Activated CD8-positive, alpha-beta T cell treated with anti-CD3 and anti-CD28 coated beads for 36 hours (primary cell): ENCODE measurements at regions of chr12 and their contacts with region 1.

Region 1: DNA sequence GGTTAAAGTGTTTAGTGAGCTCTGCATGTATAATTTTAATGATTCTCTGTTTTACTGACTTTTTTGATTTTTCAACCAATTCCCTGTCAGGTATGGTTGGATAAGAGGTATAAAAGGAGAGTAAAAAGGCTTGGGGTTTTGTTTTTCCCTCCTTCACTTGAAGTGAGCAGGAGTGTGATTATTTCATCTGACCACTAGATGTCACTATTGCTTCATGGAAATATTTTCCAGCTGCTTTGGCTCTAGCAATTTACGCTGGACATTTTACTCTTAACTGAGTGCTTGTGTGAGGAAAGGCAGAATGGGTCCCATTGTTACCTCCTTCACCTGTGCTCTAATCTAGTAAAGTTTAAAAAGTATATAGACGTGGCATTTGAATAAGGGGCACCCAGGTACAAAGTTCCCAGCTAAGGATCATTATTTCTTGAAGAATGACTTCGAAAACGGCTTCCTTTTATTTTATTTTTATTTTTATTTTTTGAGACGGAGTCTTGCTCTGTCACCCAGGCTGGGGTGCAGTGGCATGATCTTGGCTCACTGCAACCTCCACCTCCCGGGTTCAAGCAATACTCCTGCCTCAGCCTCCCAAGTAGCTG is 66.5 kb downstream of the TBC1D30 start:
- DNase-seq: no peak
- ATAC-seq: peak; percentile 67
- H3K4me3 Mint-ChIP-seq: no peak overlapping the region
- H3K27ac Mint-ChIP-seq: no peak overlapping the region
- H3K4me1 Mint-ChIP-seq: peaks cover 5% of the 10 kb centered on the region
- H3K27me3 Mint-ChIP-seq: peaks cover 15% of the 10 kb centered on the region
- CTCF ChIP-seq: peak; percentile 93

Region 2: DNA sequence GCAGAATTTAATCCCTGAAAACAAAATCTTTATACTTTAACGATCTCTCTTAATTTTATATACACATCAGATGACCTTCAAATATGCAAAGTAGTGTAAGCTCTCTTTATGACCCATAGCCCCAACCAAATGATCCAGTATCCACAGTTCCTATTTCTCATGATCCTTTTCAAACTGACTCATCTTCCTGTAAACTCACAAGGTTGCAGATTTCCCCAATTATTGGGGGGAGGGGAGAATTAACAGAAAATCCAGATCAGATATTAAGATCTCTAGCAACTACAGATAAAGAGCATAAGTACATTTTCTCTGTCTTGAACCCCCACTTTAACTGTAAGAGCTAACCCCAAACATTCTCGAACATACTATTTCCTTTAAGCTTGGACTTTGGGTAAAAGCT is 144.3 kb before region 1 on chr12:
- CTCF ChIA-PET with region 1: no interaction called
- POLR2A ChIA-PET with region 1: no interaction called
- intact Hi-C with region 1: no loop called
- DNase-seq: no peak
- ATAC-seq: no peak
- H3K4me3 Mint-ChIP-seq: no peak overlapping the region
- H3K27ac Mint-ChIP-seq: no peak overlapping the region
- H3K4me1 Mint-ChIP-seq: peaks cover 2% of the 10 kb centered on the region
- H3K27me3 Mint-ChIP-seq: no peaks in the 10 kb centered on the region
- CTCF ChIP-seq: no peak

Region 3: DNA sequence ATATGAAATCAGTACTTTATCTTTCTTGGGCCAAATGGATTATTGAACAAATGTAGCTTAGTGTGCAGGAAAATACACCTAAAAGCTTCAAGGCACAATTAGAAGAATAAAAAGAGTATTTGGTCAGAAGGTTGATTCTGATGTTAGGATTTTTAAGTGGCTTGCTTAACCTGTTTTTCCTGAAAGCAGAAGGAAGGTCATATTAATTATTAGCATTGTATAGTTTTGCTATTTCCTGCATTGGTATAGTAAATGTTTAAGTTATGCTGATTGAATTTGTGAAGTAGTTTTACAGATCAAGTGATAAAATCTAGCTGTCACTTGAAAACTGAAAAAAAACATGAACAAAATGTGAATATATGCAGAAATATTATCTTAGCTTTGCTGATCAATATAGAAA is 100.7 kb before region 1 on chr12:
- CTCF ChIA-PET with region 1: no interaction called
- POLR2A ChIA-PET with region 1: no interaction called
- intact Hi-C with region 1: no loop called
- DNase-seq: no peak
- ATAC-seq: no peak
- H3K4me3 Mint-ChIP-seq: no peak overlapping the region
- H3K27ac Mint-ChIP-seq: no peak overlapping the region
- H3K4me1 Mint-ChIP-seq: no peaks in the 10 kb centered on the region
- H3K27me3 Mint-ChIP-seq: no peaks in the 10 kb centered on the region
- CTCF ChIP-seq: no peak

Region 4: GRCh38 chr12:64877363-64878004 is 13.5 kb before region 1 on chr12:
- CTCF ChIA-PET with region 1: interaction called, 27 read pairs
- POLR2A ChIA-PET with region 1: interaction called, 3 read pairs
- intact Hi-C with region 1: no loop called
- DNase-seq: peak; percentile 31
- ATAC-seq: peak; percentile 83
- H3K4me3 Mint-ChIP-seq: no peak overlapping the region
- H3K27ac Mint-ChIP-seq: peak overlapping the region; percentile 76
- H3K4me1 Mint-ChIP-seq: peaks cover 27% of the 10 kb centered on the region
- H3K27me3 Mint-ChIP-seq: peaks cover 2% of the 10 kb centered on the region
- CTCF ChIP-seq: no peak

Region 5: DNA sequence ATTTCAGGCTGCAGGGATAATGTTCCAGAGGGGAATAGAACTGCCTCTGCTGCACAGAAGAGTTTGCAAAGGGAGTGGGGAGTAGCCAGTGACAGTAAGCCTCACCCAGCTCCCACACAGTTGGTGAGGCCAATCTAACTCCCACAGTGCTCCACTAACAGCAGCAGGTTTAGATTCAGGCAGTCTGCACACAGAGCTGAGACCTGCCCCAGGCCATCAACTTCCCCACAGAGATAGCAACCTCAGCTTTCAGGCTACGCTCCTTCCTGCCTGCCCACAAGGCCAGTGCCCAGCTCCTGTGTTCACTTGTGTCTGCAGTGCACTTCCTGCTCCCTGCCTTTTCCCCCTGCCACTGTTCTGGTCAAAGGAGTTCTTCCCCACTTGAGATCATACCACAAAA is 41.0 kb after region 1 on chr12:
- CTCF ChIA-PET with region 1: no interaction called
- POLR2A ChIA-PET with region 1: no interaction called
- intact Hi-C with region 1: no loop called
- DNase-seq: no peak
- ATAC-seq: no peak
- H3K4me3 Mint-ChIP-seq: no peak overlapping the region
- H3K27ac Mint-ChIP-seq: no peak overlapping the region
- H3K4me1 Mint-ChIP-seq: no peaks in the 10 kb centered on the region
- H3K27me3 Mint-ChIP-seq: peaks cover 21% of the 10 kb centered on the region
- CTCF ChIP-seq: no peak

Region 6: DNA sequence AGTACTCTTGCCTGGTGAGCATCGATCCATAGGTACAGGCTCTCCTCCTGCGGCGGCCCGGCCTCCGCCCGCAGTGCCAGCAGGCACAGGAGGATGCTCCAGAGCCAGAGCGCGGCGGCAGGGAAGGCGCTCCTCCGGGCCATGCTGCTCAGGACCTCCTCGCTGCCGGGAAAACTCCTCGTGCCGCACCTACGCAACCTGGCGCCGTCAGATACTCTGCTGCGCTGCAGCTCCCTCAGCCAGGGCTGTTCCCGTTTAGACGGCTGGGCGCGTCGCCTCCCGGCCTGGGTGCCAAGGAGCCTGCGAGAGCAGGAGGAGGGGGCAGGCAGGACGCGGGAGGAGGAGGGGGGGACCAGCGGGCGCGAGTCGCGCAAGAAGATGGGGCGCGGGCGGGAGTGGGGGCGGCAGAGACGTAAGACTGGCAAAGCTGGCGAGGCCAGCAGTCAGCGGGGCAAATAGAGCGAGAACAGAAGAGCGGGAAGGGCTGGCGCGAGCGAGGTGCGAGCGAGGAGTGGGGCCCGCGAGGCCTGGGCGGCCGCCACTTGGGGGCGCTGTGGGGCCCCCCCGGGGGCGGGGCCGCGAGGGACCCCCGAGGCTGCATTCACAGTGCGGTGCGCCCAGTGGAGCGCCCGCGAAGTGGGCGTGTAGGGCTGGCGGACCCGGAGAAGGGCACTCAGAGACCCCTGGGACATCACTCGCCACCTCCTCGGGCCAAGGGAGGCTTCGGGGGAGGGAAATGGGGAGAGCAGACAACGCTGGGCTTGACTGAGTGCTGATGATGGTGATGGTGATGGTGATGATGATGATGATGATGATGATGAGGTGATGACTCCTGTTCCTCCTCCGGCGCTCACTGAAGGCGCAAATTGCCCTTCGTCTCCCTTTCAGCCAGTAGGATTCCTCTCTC is 230.3 kb after region 1 on chr12 and contains the start of gene WIF1:
- CTCF ChIA-PET with region 1: interaction called, 16 read pairs
- POLR2A ChIA-PET with region 1: no interaction called
- intact Hi-C with region 1: loop called (anchors 5 kb)
- DNase-seq: peak; percentile 40
- ATAC-seq: peak; percentile 86
- H3K4me3 Mint-ChIP-seq: peak within 1 kb of the TSS; percentile 44
- H3K27ac Mint-ChIP-seq: no peak within 1 kb of the TSS
- H3K4me1 Mint-ChIP-seq: peaks cover 3% of the 10 kb centered on the region
- H3K27me3 Mint-ChIP-seq: peaks cover 40% of the 10 kb centered on the region
- CTCF ChIP-seq: peak; percentile 53
- total RNA-seq, gene WIF1: not detected

Region 7: GRCh38 chr12:65525491-65526161 is 634.7 kb after region 1 on chr12:
- CTCF ChIA-PET with region 1: no interaction called
- POLR2A ChIA-PET with region 1: no interaction called
- intact Hi-C with region 1: no loop called
- DNase-seq: no peak
- ATAC-seq: no peak
- H3K4me3 Mint-ChIP-seq: no peak overlapping the region
- H3K27ac Mint-ChIP-seq: no peak overlapping the region
- H3K4me1 Mint-ChIP-seq: no peaks in the 10 kb centered on the region
- H3K27me3 Mint-ChIP-seq: no peaks in the 10 kb centered on the region
- CTCF ChIP-seq: no peak

Region 8: DNA sequence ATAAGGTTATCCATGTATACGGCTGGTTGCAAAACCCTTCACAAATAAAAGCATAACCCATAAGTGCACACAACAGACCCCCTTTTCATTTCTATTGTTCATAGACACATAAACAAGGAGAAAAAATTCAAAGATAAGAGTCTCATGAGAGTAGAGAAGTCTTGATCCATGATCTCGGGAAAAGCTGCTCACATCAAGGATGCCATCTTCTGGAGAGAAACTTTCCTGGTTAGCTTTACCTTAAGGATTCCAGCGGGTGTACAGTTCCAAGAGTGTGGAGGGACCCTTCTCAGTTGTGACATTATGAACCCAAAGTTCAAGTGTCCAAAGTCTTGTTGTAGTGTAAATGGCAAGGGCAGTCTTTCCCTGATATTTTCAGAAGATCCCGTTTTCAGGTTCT is 1095.1 kb after region 1 on chr12:
- CTCF ChIA-PET with region 1: no interaction called
- POLR2A ChIA-PET with region 1: no interaction called
- intact Hi-C with region 1: loop called (anchors 10 kb)
- DNase-seq: no peak
- ATAC-seq: no peak
- H3K4me3 Mint-ChIP-seq: no peak overlapping the region
- H3K27ac Mint-ChIP-seq: no peak overlapping the region
- H3K4me1 Mint-ChIP-seq: no peaks in the 10 kb centered on the region
- H3K27me3 Mint-ChIP-seq: peaks cover 6% of the 10 kb centered on the region
- CTCF ChIP-seq: no peak